HepG2 (cell line): ENCODE measurements at regions of chr12 and their contacts with region 1.

Region 1: DNA sequence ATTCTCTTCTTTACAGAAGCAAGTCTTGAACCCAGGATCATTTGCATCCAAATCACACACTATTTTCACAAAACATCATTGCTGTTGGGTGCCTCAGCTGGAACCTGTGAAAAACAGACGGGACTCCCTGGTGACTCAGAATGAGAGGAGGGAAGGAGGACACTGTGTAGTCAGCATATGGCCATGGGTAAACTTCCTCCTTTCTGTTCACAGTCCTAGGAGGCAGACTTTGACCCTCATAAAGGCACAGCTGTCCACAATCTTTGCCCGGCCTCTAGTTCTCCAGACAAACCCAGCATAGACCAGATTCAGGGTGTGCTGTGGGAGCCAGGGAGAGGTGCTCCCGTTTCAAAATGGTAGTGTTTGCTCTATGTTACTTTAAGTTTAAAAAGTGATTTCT is 62.0 kb downstream of the DYRK2 start:
- DNase-seq: peak; percentile 67
- ATAC-seq: peak; percentile 99
- H3K4me3 ChIP-seq: no peak overlapping the region
- H3K27ac ChIP-seq: no peak overlapping the region
- H3K4me1 ChIP-seq: peaks cover 17% of the 10 kb centered on the region
- H3K27me3 ChIP-seq: no peaks in the 10 kb centered on the region
- CTCF ChIP-seq: no peak
- EP300 ChIP-seq: peak in 1 of 2 experiments; percentile 45; a peak in 1 of 4 replicates
- POLR2A ChIP-seq: no peak
- RAD21 ChIP-seq: no peak

Region 2: GRCh38 chr12:67617619-67618018 is 93.0 kb before region 1 on chr12:
- CTCF ChIA-PET with region 1: no interaction called
- POLR2A ChIA-PET with region 1: no interaction called
- in situ Hi-C with region 1: no loop called
- intact Hi-C with region 1: no loop called
- DNase-seq: no peak
- ATAC-seq: no peak
- H3K4me3 ChIP-seq: no peak overlapping the region
- H3K27ac ChIP-seq: no peak overlapping the region
- H3K4me1 ChIP-seq: no peaks in the 10 kb centered on the region
- H3K27me3 ChIP-seq: no peaks in the 10 kb centered on the region; a peak in 1 of 5 replicates
- CTCF ChIP-seq: no peak
- EP300 ChIP-seq: no peak
- POLR2A ChIP-seq: no peak
- RAD21 ChIP-seq: no peak

Region 3: DNA sequence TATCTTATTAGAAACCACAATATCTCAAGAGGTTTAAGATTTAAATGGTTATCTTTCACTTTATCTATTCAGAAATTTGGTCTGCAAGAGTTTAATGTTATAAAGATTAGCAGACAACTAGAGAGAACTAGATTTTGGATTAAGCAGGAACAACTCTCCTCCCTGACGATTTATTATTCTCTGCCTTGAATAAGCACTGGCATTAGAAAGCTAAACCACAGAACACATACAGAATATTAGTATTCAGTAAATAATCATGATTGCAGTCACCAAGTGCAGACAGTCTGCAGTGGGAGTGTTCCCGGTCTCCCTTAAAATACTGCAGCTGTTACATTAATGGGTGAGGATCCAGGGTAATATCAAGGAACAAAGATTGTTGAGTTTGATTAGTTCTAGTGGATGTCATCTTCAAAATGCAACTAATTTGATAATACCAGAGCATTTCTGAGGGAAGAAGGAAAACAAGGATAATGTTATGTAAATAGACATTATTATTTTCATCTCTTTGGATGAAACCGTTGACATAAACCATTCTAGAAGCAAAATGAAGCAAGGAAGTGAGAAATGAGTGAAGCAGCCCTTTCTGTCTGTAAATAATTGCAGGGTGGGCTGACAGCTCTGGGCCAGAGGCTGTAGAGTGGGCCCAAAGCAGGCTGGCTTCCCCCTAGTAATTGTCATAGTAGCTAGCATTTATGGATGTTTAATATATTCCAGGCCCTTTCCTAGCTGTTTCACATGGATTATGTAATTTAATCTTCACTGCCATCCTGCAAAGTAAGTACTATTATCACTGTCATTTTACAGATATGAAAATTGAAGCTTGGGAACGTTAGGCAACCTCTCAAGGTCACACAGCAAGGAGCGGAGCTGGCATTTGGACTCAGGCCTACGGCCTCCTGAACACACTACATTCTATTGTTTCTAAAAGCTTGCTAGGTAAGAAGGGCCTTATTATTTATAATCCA is 17.4 kb after region 1 on chr12:
- CTCF ChIA-PET with region 1: no interaction called
- POLR2A ChIA-PET with region 1: no interaction called
- in situ Hi-C with region 1: no loop called
- intact Hi-C with region 1: no loop called
- DNase-seq: no peak
- ATAC-seq: 0 out of 3 replicates have a peak, but pooled peaks have one; percentile 28
- H3K4me3 ChIP-seq: no peak overlapping the region
- H3K27ac ChIP-seq: no peak overlapping the region
- H3K4me1 ChIP-seq: peaks cover 7% of the 10 kb centered on the region; the same call in 1 of the 2 replicates
- H3K27me3 ChIP-seq: no peaks in the 10 kb centered on the region; a peak in 1 of 5 replicates
- CTCF ChIP-seq: no peak
- EP300 ChIP-seq: no peak
- POLR2A ChIP-seq: no peak
- RAD21 ChIP-seq: no peak

Region 4: DNA sequence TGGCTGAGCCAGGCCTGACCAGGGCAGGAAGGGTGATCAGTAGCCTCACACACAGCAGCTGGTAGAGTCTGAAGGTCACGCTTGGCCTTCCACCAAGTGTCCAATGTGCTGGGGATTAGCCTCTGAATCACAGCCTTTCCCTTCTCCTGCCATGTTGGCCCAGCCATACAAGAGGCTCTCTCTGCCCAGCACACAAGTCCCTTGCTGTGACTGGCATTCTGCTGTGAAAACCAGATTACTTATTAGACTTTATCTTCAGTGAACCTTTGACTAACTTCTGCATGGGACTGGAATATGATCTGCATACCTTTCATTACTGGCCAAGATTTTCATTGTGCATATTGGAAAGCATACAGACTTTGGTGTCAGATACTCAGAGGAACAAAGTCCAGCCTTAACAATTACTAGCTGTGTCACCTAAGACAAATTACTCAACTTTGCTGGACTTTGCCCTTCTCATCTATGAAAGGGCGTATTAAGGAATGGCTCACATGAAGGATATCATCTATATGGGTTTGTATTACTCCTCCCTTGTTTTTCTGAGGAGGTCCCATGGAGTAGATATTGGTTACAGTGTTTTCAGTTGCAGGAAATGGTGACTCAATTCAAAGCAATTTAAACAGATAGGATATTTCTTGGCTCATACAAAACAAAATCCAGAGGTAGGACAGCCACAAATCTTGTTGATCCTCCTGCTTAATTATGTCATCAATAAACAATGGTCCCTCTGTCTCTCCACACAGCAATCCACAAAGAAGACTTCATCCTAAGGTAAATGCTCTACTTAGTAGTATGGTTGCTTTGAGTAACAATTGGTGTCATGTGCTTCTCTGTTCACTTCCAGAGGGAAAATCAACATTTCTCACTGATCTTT is 37.5 kb after region 1 on chr12:
- CTCF ChIA-PET with region 1: no interaction called
- POLR2A ChIA-PET with region 1: no interaction called
- in situ Hi-C with region 1: no loop called
- intact Hi-C with region 1: loop called (anchors 2 kb)
- DNase-seq: peak; percentile 87
- ATAC-seq: peak; percentile 91
- H3K4me3 ChIP-seq: 0 out of 6 replicates have a peak overlapping the region, but pooled peaks of 1 of the 3 experiments have one; percentile 15
- H3K27ac ChIP-seq: peak overlapping the region; percentile 37
- H3K4me1 ChIP-seq: peaks cover 25% of the 10 kb centered on the region
- H3K27me3 ChIP-seq: no peaks in the 10 kb centered on the region
- CTCF ChIP-seq: no peak
- EP300 ChIP-seq: peak in 1 of 2 experiments; percentile 30; a peak in 1 of 4 replicates
- POLR2A ChIP-seq: no peak
- RAD21 ChIP-seq: no peak